Head of caudate nucleus (tissue), 42 donors: ENCODE measurements at regions of chrX and their contacts with region 1.

Region 1: DNA sequence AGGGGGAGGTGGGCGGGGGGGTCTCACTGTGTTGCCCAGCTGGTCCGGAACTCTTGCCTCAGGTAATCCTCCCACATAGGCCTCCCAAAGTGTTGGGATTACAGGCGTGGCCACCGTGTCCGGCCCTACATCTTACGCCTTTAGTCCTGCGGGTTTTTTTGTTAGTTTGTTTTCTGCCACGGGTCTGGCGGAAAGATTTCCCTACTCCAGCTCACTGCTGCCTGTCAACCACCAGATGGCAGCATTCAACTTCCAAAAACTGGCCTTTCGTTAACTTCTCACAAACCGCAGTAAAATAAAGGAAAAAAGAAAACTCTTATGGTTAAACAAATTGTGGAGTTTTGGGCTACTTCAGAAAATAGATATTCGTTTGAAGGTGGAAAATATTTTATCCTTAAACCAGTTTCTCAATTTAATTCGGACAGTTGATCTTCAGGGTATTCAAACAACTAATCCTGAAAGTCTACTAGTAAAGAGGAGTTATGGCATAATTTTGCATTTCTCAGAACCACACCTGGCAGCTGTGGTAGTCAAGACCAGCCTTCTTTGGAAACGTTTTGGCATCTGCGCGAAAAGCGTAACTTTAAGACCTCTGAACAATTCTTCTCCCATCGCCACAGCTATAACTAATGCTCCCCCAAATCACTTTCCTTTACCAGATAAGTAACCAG is 41.1 kb downstream of the LUZP4 start:
- DNase-seq: peak in 38 of 42 donors; percentile 15 to 75 (median 48)

Region 2: DNA sequence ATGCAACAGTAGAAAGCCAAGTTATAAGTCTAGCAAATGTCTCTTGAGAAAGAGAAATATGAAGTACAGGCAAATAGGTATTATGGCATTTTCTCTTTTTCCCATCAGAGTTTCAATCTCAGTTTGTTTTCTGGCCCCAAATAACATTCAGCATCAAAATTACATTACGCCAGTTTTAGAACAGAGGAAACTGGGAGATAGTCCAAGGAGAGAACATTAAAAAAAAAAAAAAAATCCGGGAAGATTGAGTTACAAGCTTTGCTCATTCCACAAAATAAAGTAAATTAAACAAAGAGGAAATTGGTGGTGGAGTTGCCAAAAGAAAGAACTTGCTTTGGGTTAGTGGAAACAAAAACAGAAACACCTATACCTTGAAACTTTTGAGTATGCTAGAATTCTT is 262.8 kb before region 1 on chrX:
- intact Hi-C with region 1: no loop called
- DNase-seq: no peak

Region 3: GRCh38 chrX:115393271-115393670 is 62.6 kb after region 1 on chrX:
- intact Hi-C with region 1: no loop called
- DNase-seq: no peak

Region 4: DNA sequence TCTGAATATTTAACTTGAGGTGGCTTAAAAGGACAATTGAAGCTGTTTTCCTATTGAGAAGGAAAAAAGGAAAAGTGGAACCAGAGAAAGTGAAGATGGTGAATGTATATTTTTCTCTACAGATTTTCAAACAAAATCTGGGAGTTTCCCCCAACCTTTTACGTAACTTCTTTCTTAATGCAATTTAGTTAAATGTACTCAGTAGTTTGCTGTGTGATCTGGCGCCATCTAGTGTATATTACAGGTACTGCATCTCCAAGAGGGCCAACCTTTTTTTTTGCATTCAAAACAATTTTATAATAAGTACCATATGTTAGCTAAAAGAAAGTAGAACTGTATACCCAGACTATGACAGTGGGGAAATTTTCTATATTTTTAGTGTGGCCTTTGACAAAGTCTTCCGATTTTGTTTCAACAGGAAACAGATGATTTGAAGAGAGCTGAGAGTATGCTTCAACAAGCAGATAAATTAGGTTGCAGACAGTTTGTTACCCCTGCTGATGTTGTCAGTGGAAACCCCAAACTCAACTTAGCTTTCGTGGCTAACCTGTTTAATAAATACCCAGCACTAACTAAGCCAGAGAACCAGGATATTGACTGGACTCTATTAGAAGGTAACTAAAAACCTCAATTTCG is 312.4 kb after region 1 on chrX:
- intact Hi-C with region 1: loop called (anchors 2 kb)
- DNase-seq: peak in 29 of 42 donors; percentile 11 to 77 (median 37)